GM10248 (cell line): ENCODE measurements at regions of chr4 and their contacts with region 1.

Region 1: DNA sequence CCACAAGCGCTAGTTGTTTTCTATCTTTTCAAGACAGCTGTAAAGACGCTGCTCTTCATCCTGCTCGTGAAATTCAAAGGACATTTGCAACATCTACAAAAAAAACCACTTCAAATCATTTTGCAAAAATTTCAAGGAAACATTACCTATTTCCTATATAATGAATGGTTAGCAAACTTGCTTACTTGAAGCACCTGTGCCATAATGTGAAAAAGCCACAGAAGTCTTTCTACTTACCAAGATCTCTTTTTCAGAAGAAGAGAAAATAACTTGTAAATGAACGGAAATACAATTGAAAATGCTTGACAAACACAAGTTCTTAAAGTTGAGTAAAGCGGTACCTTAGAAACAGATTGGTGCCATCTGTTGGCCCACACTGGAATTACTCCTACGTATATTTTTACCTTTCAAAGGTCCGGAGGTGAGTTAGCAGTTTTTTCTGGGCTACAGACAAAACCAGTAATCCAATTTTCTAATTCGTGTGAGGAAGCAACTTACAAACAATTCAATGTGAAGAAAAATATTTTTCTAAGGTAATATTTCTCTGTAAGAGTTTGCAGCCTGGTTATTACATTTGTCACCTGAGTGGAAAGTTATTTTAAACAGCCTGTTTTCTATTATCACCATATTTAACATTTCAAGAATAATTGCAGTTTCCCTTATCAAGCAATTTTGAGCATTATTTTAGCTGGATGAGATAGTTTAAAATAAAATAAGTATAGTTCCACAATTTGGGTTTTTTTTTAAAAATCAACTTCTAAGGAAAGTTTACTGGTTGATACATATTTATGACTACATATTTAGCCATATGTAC is at the start of gene TLR6:
- DNase-seq: peak; percentile 47
- CTCF ChIP-seq: peak; percentile 52

Region 2: DNA sequence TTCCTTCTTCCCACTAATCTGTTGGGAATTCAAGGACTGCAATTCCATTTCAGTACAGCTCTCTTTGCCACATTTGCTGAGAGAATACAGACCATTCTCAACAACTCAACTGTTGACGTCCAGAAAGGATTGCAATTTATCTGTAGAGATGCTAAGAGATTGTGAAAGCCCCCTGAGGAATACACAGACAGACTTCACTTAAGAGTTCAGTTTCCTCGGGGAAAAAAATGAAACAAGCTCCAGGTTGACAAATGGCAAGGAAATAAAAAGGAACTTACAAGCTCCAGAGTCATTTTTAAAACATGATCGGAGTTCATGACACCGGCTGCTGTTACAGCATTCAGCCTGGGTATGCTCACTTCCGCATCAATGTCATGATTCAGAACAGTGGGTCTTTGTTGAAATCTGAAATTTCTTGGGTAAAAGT is 87.8 kb before region 1 on chr4:
- CTCF ChIA-PET with region 1: interaction called, 14 read pairs
- POLR2A ChIA-PET with region 1: no interaction called
- DNase-seq: no peak
- CTCF ChIP-seq: no peak

Region 3: GRCh38 chr4:38804654-38805295 is 52.0 kb before region 1 on chr4 and contains the start of gene TLR1:
- CTCF ChIA-PET with region 1: interaction called, 24 read pairs
- POLR2A ChIA-PET with region 1: no interaction called
- DNase-seq: no peak
- CTCF ChIP-seq: peak; percentile 41

Region 4: GRCh38 chr4:38832624-38833528 is 23.9 kb before region 1 on chr4:
- CTCF ChIA-PET with region 1: interaction called, 11 read pairs
- POLR2A ChIA-PET with region 1: no interaction called
- DNase-seq: no peak
- CTCF ChIP-seq: no peak

Region 5: GRCh38 chr4:38872604-38873006 is 15.9 kb after region 1 on chr4:
- CTCF ChIA-PET with region 1: interaction called, 79 read pairs
- POLR2A ChIA-PET with region 1: no interaction called
- DNase-seq: no peak
- CTCF ChIP-seq: no peak

Region 6: GRCh38 chr4:39134683-39135319 is 278.1 kb after region 1 on chr4:
- CTCF ChIA-PET with region 1: interaction called, 20 read pairs
- POLR2A ChIA-PET with region 1: no interaction called
- DNase-seq: no peak
- CTCF ChIP-seq: no peak